Activated T-helper 1 cell treated with anti-CD3 and anti-CD28 coated beads, Interleukin-12 subunit alpha, Interleukin-12 subunit beta, Interleukin-2, Interleukin-4 antibody, amounts not matched to agents 30 ng/mL and 10 ng/mL and 1 ng/mL, durations not matched to agents 14 hours and 24 hours and 36 hours (primary cell): ENCODE measurements at regions of chr13 and their contacts with region 1.

Region 1: DNA sequence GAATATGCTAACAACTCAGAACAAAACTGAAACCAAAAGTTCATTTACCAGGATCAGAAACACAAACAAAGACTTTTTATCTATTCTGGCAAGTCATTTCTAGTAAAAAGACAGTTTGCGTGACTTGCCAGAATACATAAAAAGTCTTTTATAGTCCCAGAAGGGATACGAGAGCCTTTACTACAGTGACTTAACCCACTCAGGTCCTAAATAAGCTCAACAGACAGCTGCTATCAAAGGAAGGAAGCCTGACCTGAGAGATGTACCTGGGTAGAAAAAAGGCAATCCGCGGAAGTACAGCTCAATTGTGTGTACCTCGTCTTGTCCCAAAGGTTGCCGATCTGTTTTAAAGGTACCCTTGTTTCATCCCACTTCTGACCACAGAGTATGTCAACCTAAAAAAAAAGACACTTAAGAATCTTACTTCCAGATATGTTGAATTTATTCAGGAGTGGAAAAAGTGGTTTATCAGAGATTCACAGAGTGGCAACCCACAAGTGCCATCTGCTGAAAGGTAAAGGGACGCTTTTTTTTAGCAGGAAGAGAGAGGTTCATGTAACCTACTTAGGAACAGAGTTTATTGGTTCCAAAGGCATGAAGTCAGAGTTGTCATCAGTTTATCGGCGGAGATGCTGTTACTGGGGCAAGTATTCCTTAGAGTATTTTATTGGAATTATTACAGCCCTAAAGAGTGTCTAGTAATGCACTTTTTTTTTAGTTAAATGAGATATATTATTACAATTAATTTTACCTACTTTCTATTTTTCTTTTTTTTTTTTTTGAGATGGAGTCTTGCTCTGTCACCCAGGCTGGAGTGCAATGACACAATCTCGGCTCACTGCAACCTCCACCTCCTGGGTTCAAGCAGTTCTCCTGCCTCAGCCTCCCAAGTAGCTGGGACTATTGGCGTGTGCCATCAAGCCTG is 69.7 kb upstream of the C1QTNF9B start:
- DNase-seq: peak; percentile 40
- H3K4me3 Mint-ChIP-seq: peak overlapping the region; percentile 77
- H3K27ac Mint-ChIP-seq: peak overlapping the region; percentile 86
- H3K4me1 Mint-ChIP-seq: peaks cover 47% of the 10 kb centered on the region
- H3K27me3 Mint-ChIP-seq: no peaks in the 10 kb centered on the region

Region 2: GRCh38 chr13:23888658-23889614 is 78.0 kb before region 1 on chr13 and contains the start of gene MIPEP:
- intact Hi-C with region 1: loop called (anchors 1 kb)
- DNase-seq: peak; percentile 86
- H3K4me3 Mint-ChIP-seq: peak within 1 kb of the TSS; percentile 89
- H3K27ac Mint-ChIP-seq: peak within 1 kb of the TSS; percentile 90
- H3K4me1 Mint-ChIP-seq: peaks cover 31% of the 10 kb centered on the region
- H3K27me3 Mint-ChIP-seq: no peaks in the 10 kb centered on the region
- total RNA-seq, gene MIPEP: 7.3 and 7.8 TPM in 2 replicates

Region 3: GRCh38 chr13:23980160-23980551 is 13.2 kb after region 1 on chr13:
- intact Hi-C with region 1: loop called (anchors 1 kb)
- DNase-seq: peak; percentile 89
- H3K4me3 Mint-ChIP-seq: peak overlapping the region; percentile 90
- H3K27ac Mint-ChIP-seq: peak overlapping the region; percentile 79
- H3K4me1 Mint-ChIP-seq: peaks cover 18% of the 10 kb centered on the region
- H3K27me3 Mint-ChIP-seq: peaks cover 53% of the 10 kb centered on the region

Region 4: GRCh38 chr13:24038841-24039330 is 71.9 kb after region 1 on chr13:
- intact Hi-C with region 1: loop called (anchors 2 kb)
- DNase-seq: no peak
- H3K4me3 Mint-ChIP-seq: peak overlapping the region; percentile 30
- H3K27ac Mint-ChIP-seq: peak overlapping the region; percentile 51
- H3K4me1 Mint-ChIP-seq: peaks cover 44% of the 10 kb centered on the region
- H3K27me3 Mint-ChIP-seq: peaks cover 3% of the 10 kb centered on the region